Calu3 (cell line): ENCODE measurements at regions of chr1 and their contacts with region 1.

Region 1: GRCh38 chr1:168301664-168302334 is 21.1 kb downstream of the TBX19 start:
- DNase-seq: peak; percentile 91
- H3K4me3 Mint-ChIP-seq: no peak overlapping the region
- H3K27ac Mint-ChIP-seq: peak overlapping the region; percentile 95
- H3K4me1 Mint-ChIP-seq: peaks cover 55% of the 10 kb centered on the region
- H3K27me3 Mint-ChIP-seq: no peaks in the 10 kb centered on the region
- CTCF ChIP-seq: no peak

Region 2: DNA sequence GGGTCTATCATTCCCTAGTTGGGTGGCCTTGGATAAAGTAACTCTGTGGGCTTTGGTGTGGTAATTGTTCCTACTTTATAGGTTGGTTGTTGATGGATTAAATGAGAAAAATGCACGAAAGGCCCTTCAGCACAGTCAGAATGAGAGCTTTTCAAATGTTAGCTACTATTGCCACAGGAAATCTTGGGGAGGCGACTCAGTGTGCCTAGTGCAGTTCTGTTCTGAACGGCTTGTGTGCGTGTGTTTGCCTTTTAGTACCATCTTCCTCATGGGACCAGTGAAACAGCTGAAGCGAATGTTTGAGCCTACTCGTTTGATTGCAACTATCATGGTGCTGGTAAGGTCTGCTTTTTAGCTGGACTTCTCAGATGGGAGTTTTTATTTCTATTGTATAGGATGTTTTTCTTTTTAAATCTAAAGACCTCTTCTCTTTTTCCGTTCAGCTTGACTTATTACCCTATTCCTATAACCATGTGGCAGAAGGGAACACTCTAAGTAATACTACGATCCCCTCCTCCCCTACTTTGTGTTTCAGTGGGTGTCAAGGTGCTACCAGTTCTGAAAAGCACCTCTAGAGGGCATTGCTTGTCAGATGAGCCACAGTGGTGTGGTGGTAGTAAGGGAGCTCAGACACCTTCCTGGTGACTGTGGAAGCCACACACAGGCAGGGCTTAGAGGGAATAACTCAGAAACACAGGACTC is 66.8 kb before region 1 on chr1:
- CTCF ChIA-PET with region 1: interaction called, 16 read pairs
- intact Hi-C with region 1: loop called (anchors 5 kb)
- DNase-seq: peak; percentile 70
- H3K4me3 Mint-ChIP-seq: no peak overlapping the region
- H3K27ac Mint-ChIP-seq: no peak overlapping the region
- H3K4me1 Mint-ChIP-seq: peaks cover 38% of the 10 kb centered on the region
- H3K27me3 Mint-ChIP-seq: no peaks in the 10 kb centered on the region
- CTCF ChIP-seq: peak; percentile 60

Region 3: GRCh38 chr1:168801032-168801745 is 499.4 kb after region 1 on chr1:
- CTCF ChIA-PET with region 1: no interaction called
- intact Hi-C with region 1: no loop called
- DNase-seq: peak; percentile 76
- H3K4me3 Mint-ChIP-seq: peak overlapping the region; percentile 19
- H3K27ac Mint-ChIP-seq: peak overlapping the region; percentile 96
- H3K4me1 Mint-ChIP-seq: peaks cover 59% of the 10 kb centered on the region
- H3K27me3 Mint-ChIP-seq: no peaks in the 10 kb centered on the region
- CTCF ChIP-seq: no peak